IMR-90 (cell line): ENCODE measurements at regions of chr17 and their contacts with region 1.

Region 1: GRCh38 chr17:69523244-69523861 is 108.9 kb downstream of the MAP2K6 start:
- DNase-seq: peak; percentile 64
- ATAC-seq: peak; percentile 75
- H3K4me3 ChIP-seq: no peak overlapping the region
- H3K27ac ChIP-seq: no peak overlapping the region
- H3K4me1 ChIP-seq: no peaks in the 10 kb centered on the region
- H3K27me3 ChIP-seq: no peaks in the 10 kb centered on the region
- CTCF ChIP-seq: peak; percentile 74
- POLR2A ChIP-seq: no peak
- RAD21 ChIP-seq: peak; percentile 68

Region 2: GRCh38 chr17:68771867-68772515 is 751.4 kb before region 1 on chr17:
- CTCF ChIA-PET with region 1: no interaction called
- POLR2A ChIA-PET with region 1: no interaction called
- dilution Hi-C with region 1: no loop called
- in situ Hi-C with region 1: no loop called
- intact Hi-C with region 1: loop called (anchors 1 kb)
- DNase-seq: peak; percentile 75
- ATAC-seq: peak; percentile 96
- H3K4me3 ChIP-seq: peak overlapping the region; percentile 26; the same call in 1 of the 2 replicates
- H3K27ac ChIP-seq: no peak overlapping the region
- H3K4me1 ChIP-seq: peaks cover 4% of the 10 kb centered on the region; the same call in 1 of the 2 replicates
- H3K27me3 ChIP-seq: no peaks in the 10 kb centered on the region
- CTCF ChIP-seq: peak; percentile 78
- POLR2A ChIP-seq: no peak
- RAD21 ChIP-seq: peak; percentile 81

Region 3: GRCh38 chr17:69300222-69300621 is 223.1 kb before region 1 on chr17:
- CTCF ChIA-PET with region 1: no interaction called
- POLR2A ChIA-PET with region 1: no interaction called
- dilution Hi-C with region 1: no loop called
- in situ Hi-C with region 1: no loop called
- intact Hi-C with region 1: no loop called
- DNase-seq: no peak
- ATAC-seq: no peak
- H3K4me3 ChIP-seq: no peak overlapping the region
- H3K27ac ChIP-seq: no peak overlapping the region
- H3K4me1 ChIP-seq: no peaks in the 10 kb centered on the region
- H3K27me3 ChIP-seq: no peaks in the 10 kb centered on the region
- CTCF ChIP-seq: no peak
- POLR2A ChIP-seq: no peak
- RAD21 ChIP-seq: no peak

Region 4: GRCh38 chr17:69335058-69335457 is 188.3 kb before region 1 on chr17:
- CTCF ChIA-PET with region 1: interaction called, 15 read pairs
- POLR2A ChIA-PET with region 1: no interaction called
- dilution Hi-C with region 1: no loop called
- in situ Hi-C with region 1: no loop called
- intact Hi-C with region 1: loop called (anchors 1 kb)
- DNase-seq: peak; percentile 60
- ATAC-seq: peak; percentile 75
- H3K4me3 ChIP-seq: no peak overlapping the region
- H3K27ac ChIP-seq: no peak overlapping the region
- H3K4me1 ChIP-seq: no peaks in the 10 kb centered on the region
- H3K27me3 ChIP-seq: no peaks in the 10 kb centered on the region
- CTCF ChIP-seq: peak; percentile 60
- POLR2A ChIP-seq: no peak
- RAD21 ChIP-seq: peak; percentile 62

Region 5: GRCh38 chr17:69607162-69607834 is 83.9 kb after region 1 on chr17:
- CTCF ChIA-PET with region 1: interaction called, 6 read pairs
- POLR2A ChIA-PET with region 1: no interaction called
- dilution Hi-C with region 1: no loop called
- in situ Hi-C with region 1: no loop called
- intact Hi-C with region 1: loop called (anchors 5 kb)
- DNase-seq: peak; percentile 85
- ATAC-seq: peak; percentile 59
- H3K4me3 ChIP-seq: no peak overlapping the region
- H3K27ac ChIP-seq: peak overlapping the region; percentile 97
- H3K4me1 ChIP-seq: peaks cover 18% of the 10 kb centered on the region
- H3K27me3 ChIP-seq: no peaks in the 10 kb centered on the region
- CTCF ChIP-seq: peak; percentile 93
- POLR2A ChIP-seq: 0 out of 2 replicates have a peak, but pooled peaks have one; percentile 2
- RAD21 ChIP-seq: peak; percentile 93

Region 6: DNA sequence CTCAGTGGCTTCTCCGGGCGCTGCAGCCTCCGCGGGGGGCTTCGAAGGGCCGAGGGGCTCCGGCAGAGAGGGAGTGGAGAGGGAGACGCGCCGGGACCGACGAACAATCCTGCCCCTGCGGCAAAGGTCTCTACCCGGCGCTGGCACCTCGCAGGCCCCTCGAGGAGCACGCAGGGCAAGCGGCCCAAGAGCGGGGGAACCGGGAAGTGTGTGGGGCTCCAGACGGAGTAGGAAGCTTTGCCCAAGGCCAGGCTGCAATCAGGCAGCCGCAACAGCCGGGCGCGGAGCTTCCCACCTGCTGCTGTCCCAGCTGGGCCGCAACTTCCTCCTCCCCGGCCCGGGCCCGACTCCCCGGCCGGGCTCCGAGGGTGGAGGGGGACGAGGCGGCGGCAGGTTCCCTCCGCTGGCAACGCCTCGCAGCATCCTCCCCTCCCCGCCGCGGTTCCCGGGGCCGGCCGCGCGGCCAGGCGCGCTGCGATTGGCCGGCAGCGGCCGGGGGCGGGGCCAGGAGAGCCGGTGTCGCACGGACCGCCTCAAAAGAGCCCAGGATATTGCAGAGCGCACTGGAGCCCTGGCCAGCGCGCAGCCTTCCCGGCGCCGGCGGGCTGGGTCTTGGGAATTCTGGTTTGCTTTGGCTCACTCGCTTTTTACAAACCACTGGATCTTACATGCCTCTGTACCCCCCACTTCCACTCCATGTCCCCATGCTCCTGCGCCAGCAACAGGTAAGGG is 645.8 kb after region 1 on chr17 and contains the start of gene KCNJ2:
- CTCF ChIA-PET with region 1: interaction called, 5 read pairs
- POLR2A ChIA-PET with region 1: interaction called, 5 read pairs
- dilution Hi-C with region 1: no loop called
- in situ Hi-C with region 1: no loop called
- intact Hi-C with region 1: loop called (anchors 1 kb)
- DNase-seq: peak; percentile 79
- ATAC-seq: peak; percentile 94
- H3K4me3 ChIP-seq: peak within 1 kb of the TSS; percentile 73
- H3K27ac ChIP-seq: peak within 1 kb of the TSS; percentile 75
- H3K4me1 ChIP-seq: no peaks in the 10 kb centered on the region
- H3K27me3 ChIP-seq: no peaks in the 10 kb centered on the region
- CTCF ChIP-seq: no peak
- POLR2A ChIP-seq: peak; percentile 66; the same call in 1 of the 2 replicates
- RAD21 ChIP-seq: no peak
- total RNA-seq, gene KCNJ2: 5.8 and 8.6 TPM in 2 replicates

Region 7: DNA sequence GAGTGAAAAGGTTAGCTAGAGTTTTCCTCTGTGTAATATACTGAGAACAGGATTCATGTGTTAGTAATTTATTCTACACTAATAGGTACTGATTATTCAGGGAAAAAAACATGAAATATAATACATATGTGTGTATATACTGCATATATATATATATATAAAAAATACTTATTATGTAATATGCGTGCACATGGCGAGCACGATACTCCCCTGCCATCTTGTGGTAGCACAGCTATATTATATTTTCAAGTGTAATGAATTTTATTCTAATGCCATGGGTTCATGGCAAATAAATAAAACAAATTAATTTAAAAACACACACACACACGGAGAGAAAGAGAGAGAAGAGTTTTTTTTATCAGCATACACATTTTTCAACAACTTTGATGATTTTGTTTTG is 1106.5 kb after region 1 on chr17:
- CTCF ChIA-PET with region 1: interaction called, 3 read pairs
- POLR2A ChIA-PET with region 1: no interaction called
- dilution Hi-C with region 1: no loop called
- in situ Hi-C with region 1: no loop called
- intact Hi-C with region 1: loop called (anchors 1 kb)
- DNase-seq: peak; percentile 13
- ATAC-seq: peak; percentile 24; the same call in 1 of the 2 replicates
- H3K4me3 ChIP-seq: no peak overlapping the region
- H3K27ac ChIP-seq: no peak overlapping the region
- H3K4me1 ChIP-seq: no peaks in the 10 kb centered on the region
- H3K27me3 ChIP-seq: peaks cover 2% of the 10 kb centered on the region
- CTCF ChIP-seq: peak; percentile 41
- POLR2A ChIP-seq: no peak
- RAD21 ChIP-seq: peak; percentile 51